ENCODE measurements at regions of chr10 and their contacts with region 1.

Region 1: GRCh38 chr10:99612167-99612831 is 7.9 kb downstream of the SLC25A28 start:
- DNase-seq: peak; percentile 16
- H3K4me3 ChIP-seq: no peak overlapping the region
- H3K27ac ChIP-seq: no peak overlapping the region
- H3K4me1 ChIP-seq: peaks cover 0 to 20% (median 9%) of the 10 kb centered on the region in 4 donors
- H3K27me3 ChIP-seq: no peaks in the 10 kb centered on the region
- CTCF ChIP-seq: peak; percentile 80 to 86 (median 83)
- EP300 ChIP-seq: no peak
- POLR2A ChIP-seq: no peak

Region 2: DNA sequence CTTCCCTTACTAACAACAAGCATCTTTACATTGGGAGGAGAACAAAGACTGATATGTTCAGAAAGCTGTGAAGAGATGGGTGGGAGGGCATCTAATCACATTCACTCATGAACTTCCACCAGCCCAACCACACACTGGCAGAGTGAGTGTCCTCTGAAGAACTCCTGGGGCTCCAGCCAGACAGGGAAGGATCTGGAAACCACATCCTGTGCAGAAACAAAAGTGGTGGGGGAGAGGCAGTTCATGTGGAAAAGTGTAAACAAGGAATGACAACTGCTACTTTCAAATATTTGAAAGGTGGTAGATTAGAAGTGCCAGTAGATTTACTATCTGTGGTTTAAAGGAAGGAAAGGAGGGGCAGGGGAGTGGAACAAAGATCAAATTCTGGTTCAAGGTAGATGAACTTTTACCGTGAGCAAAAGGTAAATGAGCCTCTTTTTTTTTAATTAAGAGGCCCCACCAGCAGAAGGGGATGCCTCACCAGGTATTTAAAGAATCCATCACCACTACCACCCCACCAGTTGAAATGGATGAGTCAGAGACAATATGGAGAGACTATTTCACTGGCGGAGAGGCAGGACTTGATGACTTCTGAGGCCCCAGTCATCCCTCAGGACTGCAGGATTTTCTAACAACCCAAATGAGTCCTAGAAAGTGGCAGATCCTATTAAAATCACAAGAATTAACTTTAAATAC is 216.4 kb before region 1 on chr10:
- in situ Hi-C with region 1: loop called in 1 of 4 experiments (anchors 10 kb)
- intact Hi-C with region 1: loop called (anchors 5 kb)
- DNase-seq: no peak
- H3K4me3 ChIP-seq: no peak overlapping the region
- H3K27ac ChIP-seq: no peak overlapping the region
- H3K4me1 ChIP-seq: peaks cover 0 to 3% (median 1%) of the 10 kb centered on the region in 4 donors
- H3K27me3 ChIP-seq: no peaks in the 10 kb centered on the region
- CTCF ChIP-seq: no peak
- EP300 ChIP-seq: no peak
- POLR2A ChIP-seq: no peak

Region 3: DNA sequence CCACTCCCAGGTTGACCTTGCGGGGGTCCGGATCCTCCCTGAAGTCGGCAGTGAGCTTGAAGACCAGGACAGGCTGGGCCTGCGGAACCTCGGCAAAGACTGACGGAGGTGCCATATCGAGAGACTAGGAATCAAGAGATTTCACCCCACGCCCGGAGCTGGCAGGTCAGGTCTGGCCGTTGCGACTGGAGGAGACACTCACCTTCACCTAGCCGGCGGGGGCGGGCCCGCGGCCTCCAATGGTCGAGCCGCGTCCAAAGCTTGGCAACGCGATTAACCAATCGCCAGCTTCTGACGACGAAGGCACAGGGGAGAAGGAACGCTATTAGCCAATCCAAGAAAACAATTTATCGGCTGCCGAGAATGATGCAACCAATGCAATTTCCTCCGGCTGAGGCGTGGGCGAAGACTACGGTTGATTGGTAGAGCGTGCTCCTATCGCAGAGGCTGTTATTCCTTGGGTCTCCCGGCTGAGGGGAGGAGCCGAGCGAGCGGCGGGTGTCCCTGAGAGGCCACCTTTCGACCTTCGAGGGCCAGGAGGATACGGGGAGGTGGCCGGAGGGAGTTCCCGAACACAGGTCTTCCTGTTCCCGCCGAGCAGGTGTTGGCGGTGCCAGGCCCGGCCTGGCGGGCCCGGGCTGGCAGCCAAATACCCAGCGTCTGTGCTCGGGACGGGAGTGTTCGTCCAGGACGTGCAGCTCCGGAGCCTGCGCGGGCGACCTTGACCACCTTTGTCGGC is 181.7 kb before region 1 on chr10 and contains the start of gene GOT1:
- in situ Hi-C with region 1: loop called (anchors 10 kb)
- intact Hi-C with region 1: loop called (anchors 5 kb)
- DNase-seq: peak; percentile 97
- H3K4me3 ChIP-seq: peak within 1 kb of the TSS; percentile 66 to 92 (median 78)
- H3K27ac ChIP-seq: peak within 1 kb of the TSS; percentile 91 to 99 (median 98)
- H3K4me1 ChIP-seq: peaks cover 12 to 58% (median 20%) of the 10 kb centered on the region in 4 donors
- H3K27me3 ChIP-seq: no peaks in the 10 kb centered on the region
- CTCF ChIP-seq: no peak
- EP300 ChIP-seq: no peak
- POLR2A ChIP-seq: peak; percentile 95
- total RNA-seq, gene GOT1: 54.5 to 94.3 (median 82.3) TPM

Region 4: DNA sequence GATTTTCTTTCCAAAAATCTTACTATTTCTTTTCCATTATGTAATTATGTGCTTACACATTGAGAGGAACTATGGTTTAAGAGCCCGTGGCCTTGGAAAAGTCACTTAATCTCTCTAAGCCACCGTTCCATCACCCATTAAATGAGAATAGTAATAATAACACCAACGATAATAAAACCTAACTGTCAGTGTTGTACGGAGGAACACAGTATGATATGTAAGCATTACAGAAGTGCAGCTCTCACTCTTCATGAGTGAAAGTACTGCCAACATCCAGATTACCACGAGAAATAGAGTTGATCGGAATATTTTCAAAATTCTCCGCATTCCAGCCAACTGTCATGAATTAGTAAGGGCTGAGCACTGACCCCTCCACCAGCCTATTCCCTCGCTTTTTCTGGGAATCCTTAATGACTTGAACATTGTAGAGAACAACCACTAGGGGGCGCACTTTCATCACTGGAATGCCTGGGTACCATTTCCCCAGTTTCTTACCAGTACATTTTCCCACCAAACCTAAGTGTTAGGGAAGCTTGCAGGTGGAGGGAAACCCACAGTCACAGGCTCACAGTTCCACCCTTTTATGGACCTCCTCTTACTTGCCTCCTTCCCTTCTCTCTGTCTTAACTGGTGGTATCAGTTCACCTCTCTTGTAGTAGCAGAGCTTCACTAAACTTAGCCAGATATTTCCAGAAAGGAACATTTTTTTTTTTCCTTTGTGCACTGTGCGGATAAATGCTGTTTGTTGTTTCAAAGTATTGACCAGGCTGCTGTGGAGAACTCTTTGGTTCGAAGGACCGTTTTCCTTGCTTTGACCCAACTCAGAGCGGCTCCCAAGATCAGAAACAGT is 51.8 kb before region 1 on chr10:
- in situ Hi-C with region 1: loop called in 2 of 4 experiments (anchors 5 to 10 kb)
- intact Hi-C with region 1: loop called (anchors 1 kb)
- DNase-seq: peak; percentile 59
- H3K4me3 ChIP-seq: no peak overlapping the region
- H3K27ac ChIP-seq: no peak overlapping the region
- H3K4me1 ChIP-seq: peaks cover 0 to 3% (median 0%) of the 10 kb centered on the region in 4 donors
- H3K27me3 ChIP-seq: no peaks in the 10 kb centered on the region
- CTCF ChIP-seq: peak; percentile 80 to 83 (median 83)
- EP300 ChIP-seq: no peak
- POLR2A ChIP-seq: no peak

Region 5: GRCh38 chr10:99593312-99593711 is 19.0 kb before region 1 on chr10:
- in situ Hi-C with region 1: no loop called
- intact Hi-C with region 1: no loop called
- DNase-seq: peak; percentile 82
- H3K4me3 ChIP-seq: no peak overlapping the region
- H3K27ac ChIP-seq: peak overlapping the region; percentile 25 to 81 (median 68)
- H3K4me1 ChIP-seq: peaks cover 5 to 49% (median 23%) of the 10 kb centered on the region in 4 donors
- H3K27me3 ChIP-seq: no peaks in the 10 kb centered on the region
- CTCF ChIP-seq: no peak
- EP300 ChIP-seq: no peak
- POLR2A ChIP-seq: no peak

Region 6: GRCh38 chr10:101071267-101071884 is 1459.1 kb after region 1 on chr10:
- in situ Hi-C with region 1: no loop called
- intact Hi-C with region 1: loop called (anchors 5 kb)
- DNase-seq: peak; percentile 24
- H3K4me3 ChIP-seq: no peak overlapping the region
- H3K27ac ChIP-seq: no peak overlapping the region
- H3K4me1 ChIP-seq: peaks cover 11 to 20% (median 12%) of the 10 kb centered on the region in 4 donors
- H3K27me3 ChIP-seq: peaks cover 57% of the 10 kb centered on the region
- CTCF ChIP-seq: no peak
- EP300 ChIP-seq: no peak
- POLR2A ChIP-seq: no peak

Measured in transverse colon (tissue), 4 donors.